CD14-positive monocyte (primary cell): ENCODE measurements at regions of chr9 and their contacts with region 1.

Region 1: GRCh38 chr9:33225319-33226149 is 14.4 kb upstream of the SPINK4 start:
- DNase-seq: peak; percentile 63 to 70 (median 68)
- H3K4me3 ChIP-seq: peak overlapping the region in 1 of 3 experiments; percentile 58
- H3K4me3 Mint-ChIP-seq: peak overlapping the region; percentile 53 to 71
- H3K27ac ChIP-seq: peak overlapping the region in 1 of 2 donors; percentile 90
- H3K27ac Mint-ChIP-seq: peak overlapping the region; percentile 91 to 97 (median 96)
- H3K4me1 ChIP-seq: peaks cover 38 to 45% of the 10 kb centered on the region in 2 donors
- H3K4me1 Mint-ChIP-seq: peaks cover 46% of the 10 kb centered on the region
- H3K27me3 ChIP-seq: no peaks in the 10 kb centered on the region
- H3K27me3 Mint-ChIP-seq: peaks cover 0 to 3% (median 0%) of the 10 kb centered on the region in 3 donors
- CTCF ChIP-seq: peak; percentile 85

Region 2: GRCh38 chr9:33130508-33130911 is 95.0 kb before region 1 on chr9:
- intact Hi-C with region 1: loop called in 1 of 2 experiments (anchors 5 kb)
- DNase-seq: peak; percentile 59 to 67 (median 65)
- H3K4me3 ChIP-seq: peak overlapping the region in 1 of 3 experiments; percentile 3
- H3K4me3 Mint-ChIP-seq: peak overlapping the region in 1 of 2 donors; percentile 37
- H3K27ac ChIP-seq: peak overlapping the region; percentile 54 to 78
- H3K27ac Mint-ChIP-seq: peak overlapping the region; percentile 85 to 98 (median 97)
- H3K4me1 ChIP-seq: peaks cover 35 to 54% of the 10 kb centered on the region in 2 donors
- H3K4me1 Mint-ChIP-seq: peaks cover 55% of the 10 kb centered on the region
- H3K27me3 ChIP-seq: no peaks in the 10 kb centered on the region
- H3K27me3 Mint-ChIP-seq: peaks cover 0 to 1% (median 0%) of the 10 kb centered on the region in 3 donors
- CTCF ChIP-seq: no peak

Region 3: DNA sequence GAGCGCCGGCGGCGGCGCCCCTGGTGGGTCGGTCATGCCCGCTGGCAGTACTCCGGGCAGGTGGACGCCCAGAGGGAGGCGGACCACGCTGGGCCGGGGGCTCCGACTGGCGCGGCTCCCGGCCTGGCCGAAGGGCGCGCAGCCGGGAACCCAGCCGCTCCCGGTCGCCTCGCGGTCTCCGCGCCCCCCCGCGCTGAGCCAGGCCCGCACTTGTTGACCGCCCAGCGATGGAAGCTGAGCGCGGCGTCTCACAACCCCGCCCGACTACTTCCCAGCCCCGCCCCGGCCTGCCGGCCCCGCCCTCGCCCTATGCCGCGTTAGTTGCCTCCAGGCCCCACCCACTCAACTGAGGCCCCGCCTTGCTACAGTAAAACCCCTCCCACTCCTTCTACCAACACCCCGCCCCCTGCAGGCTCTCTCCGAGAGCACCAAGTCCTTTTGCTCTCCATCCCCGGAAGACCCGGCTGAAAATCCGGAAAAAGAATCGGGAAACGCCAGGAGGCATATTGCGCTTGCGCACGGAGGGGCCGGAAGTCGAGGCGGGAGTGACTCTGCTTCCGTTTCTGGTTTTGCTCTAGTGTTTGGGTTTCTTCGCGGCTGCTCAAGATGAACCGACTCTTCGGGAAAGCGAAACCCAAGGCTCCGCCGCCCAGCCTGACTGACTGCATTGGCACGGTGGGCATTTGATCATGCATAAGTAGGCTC is 39.1 kb after region 1 on chr9 and contains the starts of genes BAG1 and CHMP5:
- intact Hi-C with region 1: loop called in 1 of 2 experiments (anchors 2 kb)
- DNase-seq: peak; percentile 99
- H3K4me3 ChIP-seq: peak within 1 kb of the TSS; percentile 79 to 98 (median 88)
- H3K4me3 Mint-ChIP-seq: peak within 1 kb of the TSS; percentile 97 to 99
- H3K27ac ChIP-seq: peak within 1 kb of the TSS; percentile 87 to 96
- H3K27ac Mint-ChIP-seq: peak within 1 kb of the TSS; percentile 97 to 100 (median 99)
- H3K4me1 ChIP-seq: peaks cover 22 to 26% of the 10 kb centered on the region in 2 donors
- H3K4me1 Mint-ChIP-seq: peaks cover 35% of the 10 kb centered on the region
- H3K27me3 ChIP-seq: no peaks in the 10 kb centered on the region
- H3K27me3 Mint-ChIP-seq: peaks cover 0 to 1% (median 0%) of the 10 kb centered on the region in 3 donors
- CTCF ChIP-seq: peak; percentile 17
- polyA plus RNA-seq, gene BAG1: 41.8 to 94.5 (median 93.6) TPM
- polyA plus RNA-seq, gene CHMP5: 33.5 to 72.5 (median 65.0) TPM

Region 4: DNA sequence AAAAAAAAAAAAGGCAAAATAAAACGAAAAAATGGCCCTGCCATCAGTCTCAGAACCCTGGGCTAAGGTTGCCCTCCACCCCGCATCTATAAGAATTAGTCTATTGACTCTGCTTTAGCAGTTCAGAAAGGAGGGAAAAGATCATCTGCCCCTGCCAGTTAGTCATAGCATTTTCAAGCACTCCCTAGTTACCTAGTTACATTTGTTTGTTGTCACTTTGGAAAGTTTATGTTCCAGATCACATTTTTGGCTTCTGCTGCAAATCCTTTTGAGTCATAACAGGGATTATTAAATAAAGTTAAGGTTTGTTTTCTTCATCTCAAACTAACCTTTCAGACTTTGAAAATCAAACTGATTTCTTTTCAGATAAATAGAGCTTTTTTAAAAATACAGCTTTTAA is 124.8 kb after region 1 on chr9:
- intact Hi-C with region 1: no loop called
- DNase-seq: no peak
- H3K4me3 ChIP-seq: no peak overlapping the region
- H3K4me3 Mint-ChIP-seq: no peak overlapping the region
- H3K27ac ChIP-seq: no peak overlapping the region
- H3K27ac Mint-ChIP-seq: peak overlapping the region in 1 of 7 donors; percentile 37
- H3K4me1 ChIP-seq: peaks cover 0 to 7% of the 10 kb centered on the region in 2 donors
- H3K4me1 Mint-ChIP-seq: peaks cover 4% of the 10 kb centered on the region
- H3K27me3 ChIP-seq: no peaks in the 10 kb centered on the region
- H3K27me3 Mint-ChIP-seq: no peaks in the 10 kb centered on the region
- CTCF ChIP-seq: no peak